Right ventricle myocardium inferior (tissue), 1 donor: ENCODE measurements at regions of chr10 and their contacts with region 1.

Region 1: DNA sequence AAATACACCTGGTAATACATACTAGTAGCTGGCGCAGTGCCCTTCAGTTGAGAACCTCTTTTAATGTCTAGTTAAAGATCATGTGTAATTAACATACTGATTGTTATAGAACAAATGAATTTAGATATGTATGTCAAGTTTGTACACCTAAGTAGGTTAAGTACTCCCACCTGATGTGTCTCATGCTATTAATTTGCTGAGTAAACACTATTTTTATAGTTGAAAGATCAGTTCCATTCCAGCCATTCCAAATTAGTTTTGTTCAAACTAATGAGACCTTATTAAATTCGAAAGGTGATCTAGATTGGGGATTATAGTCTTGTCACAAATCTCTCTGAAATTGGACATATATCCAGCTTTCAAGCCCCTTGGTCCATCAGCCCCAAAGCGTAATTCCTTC is 710.0 kb downstream of the LRMDA start:
- DNase-seq: no peak
- ATAC-seq: no peak

Region 2: GRCh38 chr10:75972491-75973276 is 168.7 kb before region 1 on chr10:
- intact Hi-C with region 1: no loop called
- DNase-seq: no peak
- ATAC-seq: peak; percentile 55

Region 3: DNA sequence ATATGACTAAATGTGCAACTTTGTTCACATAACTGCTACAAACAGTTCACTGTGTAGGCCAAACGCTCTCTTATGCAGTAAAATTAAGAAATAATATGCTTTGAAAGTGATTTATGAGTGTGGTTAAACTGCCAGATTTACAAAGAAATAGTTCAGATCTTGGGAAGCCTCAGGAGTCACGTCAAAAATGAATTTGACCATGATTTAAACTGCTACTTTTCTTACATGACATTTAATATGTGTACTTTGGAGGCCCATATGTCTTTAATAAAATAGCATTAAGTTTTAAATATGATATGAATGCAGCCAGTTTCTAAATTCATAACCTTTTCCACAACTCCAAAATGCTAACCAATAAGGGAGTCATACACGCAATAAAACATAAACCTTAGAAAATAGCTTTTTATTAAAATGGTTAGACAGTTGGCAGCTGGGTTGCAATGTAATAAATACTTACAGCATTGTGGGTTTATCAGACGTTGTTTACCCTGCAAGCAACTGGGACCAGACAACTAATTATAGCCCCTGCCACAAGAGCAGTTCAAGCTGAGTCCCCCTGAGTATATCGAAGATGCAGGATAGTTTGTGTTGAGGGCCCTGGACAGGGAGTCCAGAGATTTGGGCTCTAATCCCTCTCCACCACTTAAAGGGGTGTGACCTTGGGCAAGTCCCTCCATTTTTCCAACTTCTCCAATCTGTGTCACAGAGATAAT is 69.6 kb before region 1 on chr10:
- intact Hi-C with region 1: no loop called
- DNase-seq: no peak
- ATAC-seq: no peak

Region 4: DNA sequence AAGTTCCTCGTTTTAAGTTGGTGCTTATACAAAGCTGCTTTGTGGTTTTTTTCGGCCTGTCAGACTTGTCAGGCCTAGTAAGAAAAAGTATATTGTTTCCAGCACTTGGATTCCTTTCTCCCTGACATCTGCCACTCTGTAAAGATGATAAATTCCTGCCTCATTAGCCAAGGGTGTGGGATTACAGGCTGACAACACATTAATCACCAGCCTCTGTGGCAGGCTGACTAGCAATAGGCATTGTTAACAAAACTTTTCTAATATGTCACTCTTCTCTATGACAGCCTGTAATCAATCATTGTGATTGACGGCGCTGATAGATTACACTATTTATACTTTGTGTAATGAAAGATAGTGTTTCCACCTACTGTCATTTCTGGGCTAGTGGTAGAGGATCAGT is 27.4 kb before region 1 on chr10:
- intact Hi-C with region 1: loop called (anchors 1 kb)
- DNase-seq: no peak
- ATAC-seq: no peak